HCT116 (cell line): ENCODE measurements at regions of chr4 and their contacts with region 1.

Region 1: DNA sequence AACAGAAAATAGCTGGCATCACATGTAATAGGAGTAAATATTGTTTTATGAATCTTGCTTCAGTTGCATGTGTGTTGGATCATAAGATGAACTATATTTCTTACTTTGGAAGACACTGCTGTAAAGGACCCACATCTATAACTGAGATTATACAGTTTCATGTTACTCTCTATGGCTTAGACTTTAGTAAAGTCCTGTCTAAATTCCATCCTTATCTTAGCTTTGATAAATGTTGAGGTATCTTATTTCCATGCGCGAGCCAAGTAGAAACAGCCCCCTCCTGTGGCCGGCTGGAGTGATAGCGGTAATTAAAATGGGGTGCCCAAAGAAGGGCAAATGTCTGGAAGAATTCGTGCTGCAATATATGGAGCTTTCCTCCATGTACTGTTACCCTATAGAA is 43.0 kb downstream of the CCDC158 start:
- DNase-seq: peak; percentile 39
- ATAC-seq: peak; percentile 86
- H3K4me3 ChIP-seq: no peak overlapping the region
- H3K27ac ChIP-seq: no peak overlapping the region
- H3K4me1 ChIP-seq: peaks cover 3 to 15% of the 10 kb centered on the region in 2 experiments; a peak in 3 of 4 replicates
- H3K27me3 ChIP-seq: no peaks in the 10 kb centered on the region
- CTCF ChIP-seq: peak; percentile 76 to 88 (median 86)
- POLR2A ChIP-seq: no peak
- RAD21 ChIP-seq: peak; percentile 89

Region 2: DNA sequence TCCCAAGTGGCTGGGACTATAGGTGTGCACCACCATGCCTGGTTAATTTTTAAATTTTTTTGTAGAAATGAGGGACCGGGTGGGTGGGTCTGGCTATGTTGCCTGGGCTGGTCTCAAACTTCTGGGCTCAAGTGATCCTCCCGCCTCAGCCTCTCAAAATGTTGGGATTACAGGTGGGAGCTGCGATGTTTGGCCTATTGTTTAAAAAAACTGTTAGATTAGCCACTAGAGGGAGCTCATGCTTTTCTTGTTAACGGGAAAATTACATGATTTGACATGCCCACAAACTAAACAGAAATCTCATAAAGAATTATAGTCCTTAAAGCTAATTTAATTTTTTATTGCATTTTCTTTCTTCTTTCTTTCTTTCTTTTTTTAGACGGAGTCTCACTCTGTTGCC is 382.2 kb before region 1 on chr4:
- CTCF ChIA-PET with region 1: interaction called, 13 read pairs
- POLR2A ChIA-PET with region 1: no interaction called
- RAD21 ChIA-PET with region 1: interaction called in 1 of 2 experiments, 3 read pairs
- intact Hi-C with region 1: loop called (anchors 5 kb)
- DNase-seq: peak; percentile 42
- ATAC-seq: peak; percentile 48
- H3K4me3 ChIP-seq: no peak overlapping the region
- H3K27ac ChIP-seq: no peak overlapping the region
- H3K4me1 ChIP-seq: peaks cover 0 to 6% of the 10 kb centered on the region in 2 experiments; a peak in 2 of 4 replicates
- H3K27me3 ChIP-seq: no peaks in the 10 kb centered on the region
- CTCF ChIP-seq: peak; percentile 37 to 70 (median 60); a peak in 5 of 6 replicates
- POLR2A ChIP-seq: no peak
- RAD21 ChIP-seq: peak; percentile 80

Region 3: GRCh38 chr4:76179398-76180318 is 198.3 kb before region 1 on chr4:
- CTCF ChIA-PET with region 1: interaction called, 151 read pairs
- POLR2A ChIA-PET with region 1: interaction called, 10 read pairs
- RAD21 ChIA-PET with region 1: interaction called, 11 to 12 read pairs
- intact Hi-C with region 1: loop called (anchors 1 kb)
- DNase-seq: peak; percentile 60
- ATAC-seq: peak; percentile 99
- H3K4me3 ChIP-seq: no peak overlapping the region
- H3K27ac ChIP-seq: no peak overlapping the region
- H3K4me1 ChIP-seq: no peaks in the 10 kb centered on the region
- H3K27me3 ChIP-seq: no peaks in the 10 kb centered on the region
- CTCF ChIP-seq: peak; percentile 74 to 93 (median 86)
- POLR2A ChIP-seq: no peak
- RAD21 ChIP-seq: peak; percentile 94

Region 4: GRCh38 chr4:76305971-76306881 is 71.7 kb before region 1 on chr4 and contains the start of gene STBD1:
- CTCF ChIA-PET with region 1: interaction called, 24 read pairs
- POLR2A ChIA-PET with region 1: interaction called, 12 read pairs
- RAD21 ChIA-PET with region 1: interaction called, 5 to 10 read pairs
- intact Hi-C with region 1: loop called (anchors 2 kb)
- DNase-seq: peak; percentile 53
- ATAC-seq: peak; percentile 80
- H3K4me3 ChIP-seq: peak within 1 kb of the TSS; percentile 72 to 91
- H3K27ac ChIP-seq: peak within 1 kb of the TSS; percentile 89
- H3K4me1 ChIP-seq: peaks cover 21 to 37% of the 10 kb centered on the region in 2 experiments
- H3K27me3 ChIP-seq: no peaks in the 10 kb centered on the region
- CTCF ChIP-seq: no peak
- POLR2A ChIP-seq: peak; percentile 39
- RAD21 ChIP-seq: no peak
- total RNA-seq, gene STBD1: 5.6 TPM

Region 5: GRCh38 chr4:76366737-76367136 is 11.2 kb before region 1 on chr4:
- CTCF ChIA-PET with region 1: interaction called, 11 read pairs
- POLR2A ChIA-PET with region 1: no interaction called
- RAD21 ChIA-PET with region 1: no interaction called
- intact Hi-C with region 1: no loop called
- DNase-seq: no peak
- ATAC-seq: no peak
- H3K4me3 ChIP-seq: no peak overlapping the region
- H3K27ac ChIP-seq: no peak overlapping the region
- H3K4me1 ChIP-seq: no peaks in the 10 kb centered on the region
- H3K27me3 ChIP-seq: no peaks in the 10 kb centered on the region
- CTCF ChIP-seq: no peak
- POLR2A ChIP-seq: no peak
- RAD21 ChIP-seq: no peak

Region 6: GRCh38 chr4:76504613-76505465 is 126.9 kb after region 1 on chr4:
- CTCF ChIA-PET with region 1: interaction called, 11 read pairs
- POLR2A ChIA-PET with region 1: no interaction called
- RAD21 ChIA-PET with region 1: no interaction called
- intact Hi-C with region 1: no loop called
- DNase-seq: peak; percentile 57
- ATAC-seq: peak; percentile 81
- H3K4me3 ChIP-seq: no peak overlapping the region
- H3K27ac ChIP-seq: no peak overlapping the region
- H3K4me1 ChIP-seq: no peaks in the 10 kb centered on the region
- H3K27me3 ChIP-seq: no peaks in the 10 kb centered on the region
- CTCF ChIP-seq: peak; percentile 51 to 79 (median 74); a peak in 5 of 6 replicates
- POLR2A ChIP-seq: no peak
- RAD21 ChIP-seq: peak; percentile 89